ENCODE measurements at regions of chr5 and their contacts with region 1.

Region 1: GRCh38 chr5:66595756-66596635 is at the start of gene MAST4:
- DNase-seq: peak; percentile 87
- H3K4me3 ChIP-seq: peak within 1 kb of the TSS; percentile 58
- H3K27ac ChIP-seq: no peak within 1 kb of the TSS
- H3K4me1 ChIP-seq: peaks cover 3% of the 10 kb centered on the region
- H3K27me3 ChIP-seq: peaks cover 90% of the 10 kb centered on the region
- CTCF ChIP-seq: no peak
- total RNA-seq, gene MAST4: 4.5 and 4.7 TPM in 2 replicates

Region 2: DNA sequence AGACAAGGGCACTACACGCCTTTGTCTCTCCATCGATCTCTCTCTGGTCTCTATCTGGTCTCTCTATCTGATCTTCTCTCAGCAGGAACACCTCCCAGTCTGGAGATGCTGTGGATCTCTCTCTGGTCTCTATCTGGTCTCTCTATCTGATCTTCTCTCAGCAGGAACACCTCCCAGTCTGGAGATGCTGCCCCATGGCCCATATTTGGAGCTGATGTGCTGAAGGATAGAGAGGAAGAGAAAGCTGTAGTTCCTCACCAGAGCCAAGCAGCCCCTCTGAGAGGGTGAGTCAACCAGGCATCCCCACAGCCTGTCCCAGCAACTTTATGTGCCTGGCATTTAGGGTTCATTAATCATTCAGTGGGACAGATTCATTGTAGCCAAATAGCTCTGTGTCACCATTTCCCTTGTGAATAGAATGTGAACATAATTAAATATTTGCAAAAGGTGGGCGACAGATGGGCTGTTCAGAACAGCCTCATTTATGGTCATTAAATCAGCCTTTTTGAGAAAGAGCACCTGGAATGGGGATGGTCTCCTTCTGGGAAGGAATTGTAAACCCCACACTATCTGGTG is 189.1 kb before region 1 on chr5:
- CTCF ChIA-PET with region 1: no interaction called
- POLR2A ChIA-PET with region 1: no interaction called
- intact Hi-C with region 1: no loop called
- DNase-seq: peak; percentile 40
- H3K4me3 ChIP-seq: no peak overlapping the region
- H3K27ac ChIP-seq: no peak overlapping the region
- H3K4me1 ChIP-seq: no peaks in the 10 kb centered on the region
- H3K27me3 ChIP-seq: no peaks in the 10 kb centered on the region
- CTCF ChIP-seq: no peak

Region 3: GRCh38 chr5:66769839-66770617 is 174.0 kb after region 1 on chr5:
- CTCF ChIA-PET with region 1: no interaction called
- POLR2A ChIA-PET with region 1: no interaction called
- intact Hi-C with region 1: loop called (anchors 10 kb)
- DNase-seq: peak; percentile 48
- H3K4me3 ChIP-seq: no peak overlapping the region
- H3K27ac ChIP-seq: no peak overlapping the region
- H3K4me1 ChIP-seq: no peaks in the 10 kb centered on the region
- H3K27me3 ChIP-seq: no peaks in the 10 kb centered on the region
- CTCF ChIP-seq: peak; percentile 57